Activated CD4-positive, alpha-beta T cell treated with anti-CD3 and anti-CD28 coated beads for 36 hours (primary cell): ENCODE measurements at regions of chr17 and their contacts with region 1.

Region 1: DNA sequence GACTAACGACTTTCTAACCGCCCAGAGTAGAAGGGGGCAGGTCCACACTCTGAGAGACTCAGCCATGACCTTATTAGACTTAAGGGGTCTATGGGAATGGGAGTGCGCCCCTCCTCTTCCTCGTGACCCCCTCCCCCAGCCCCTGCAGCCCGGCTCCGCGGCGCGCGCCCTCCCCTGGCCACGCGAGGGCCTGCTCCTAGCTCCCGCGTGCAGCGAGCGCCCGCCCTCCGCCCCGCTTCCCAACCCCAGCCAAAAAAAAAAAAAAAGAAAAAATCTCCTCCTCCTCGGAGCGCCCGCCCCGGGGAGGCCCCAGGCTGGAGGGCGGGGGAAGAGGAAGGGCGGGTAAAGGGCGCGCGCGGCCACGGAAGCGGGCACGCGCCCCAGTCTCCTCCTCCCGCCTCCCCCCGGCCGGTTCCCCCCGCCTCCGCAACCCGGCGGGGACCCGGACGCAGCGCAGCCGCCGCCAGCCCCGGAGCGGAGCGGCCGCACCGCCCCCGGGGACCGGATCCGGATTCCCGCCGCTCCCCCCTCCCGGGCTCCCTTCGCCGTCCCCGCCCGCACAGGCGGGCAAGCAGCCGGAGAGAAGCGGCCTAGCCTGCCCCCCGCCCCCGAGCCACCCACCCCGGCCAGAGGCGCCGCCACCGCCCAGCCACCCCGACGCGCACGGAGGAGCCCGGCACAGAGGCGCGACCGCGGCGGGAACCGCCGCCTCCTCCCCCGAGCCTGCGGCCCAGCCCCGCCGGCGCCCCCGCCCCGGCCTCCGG is 949 bp downstream of the UBTF start:
- DNase-seq: peak; percentile 93
- ATAC-seq: peak; percentile 43
- H3K4me3 Mint-ChIP-seq: peak overlapping the region; percentile 99
- H3K27ac Mint-ChIP-seq: peak overlapping the region; percentile 99
- H3K4me1 Mint-ChIP-seq: peaks cover 51% of the 10 kb centered on the region
- H3K27me3 Mint-ChIP-seq: no peaks in the 10 kb centered on the region

Region 2: DNA sequence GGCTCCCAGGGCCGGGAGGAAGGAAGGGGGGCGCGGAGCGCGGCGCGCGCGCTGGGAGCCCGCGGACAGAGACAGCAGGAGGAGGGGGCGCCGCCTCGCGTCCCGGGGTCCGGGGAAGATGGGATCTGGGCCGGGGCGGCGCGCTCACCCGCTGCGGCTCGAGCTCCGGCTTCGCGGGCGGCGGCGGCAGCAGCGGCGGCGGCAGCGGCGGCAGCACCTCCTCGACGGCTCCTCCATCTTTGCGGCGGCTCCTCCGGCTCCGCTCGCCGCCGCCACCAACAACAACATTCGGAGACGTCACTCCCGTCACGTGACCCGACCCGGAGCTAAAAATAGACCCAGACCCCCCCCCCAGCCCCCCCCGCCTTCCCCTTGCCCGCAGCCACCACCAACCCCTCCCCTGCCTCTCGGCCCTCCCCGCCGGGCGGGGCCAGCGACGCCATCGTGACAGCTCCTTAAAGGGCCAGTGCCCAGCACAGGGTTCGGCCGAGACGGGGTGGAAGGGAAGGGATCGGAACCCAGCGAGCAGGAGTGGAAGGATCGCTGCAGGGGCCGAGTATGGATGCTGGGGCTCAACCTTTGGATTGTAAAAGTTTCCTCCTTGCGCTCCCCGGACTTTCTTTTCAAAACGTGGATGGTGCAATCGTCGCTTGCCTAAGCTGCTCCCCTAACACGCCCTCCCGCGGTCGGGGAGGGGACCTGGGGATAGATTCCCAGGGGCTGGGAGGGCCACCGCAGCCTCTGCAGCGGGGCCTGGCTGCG is 95.0 kb before region 1 on chr17 and contains the start of gene HDAC5:
- CTCF ChIA-PET with region 1: no interaction called
- POLR2A ChIA-PET with region 1: no interaction called
- intact Hi-C with region 1: loop called in 1 of 2 experiments (anchors 1 kb)
- DNase-seq: peak; percentile 98
- ATAC-seq: peak; percentile 97
- H3K4me3 Mint-ChIP-seq: peak within 1 kb of the TSS; percentile 87
- H3K27ac Mint-ChIP-seq: peak within 1 kb of the TSS; percentile 97
- H3K4me1 Mint-ChIP-seq: peaks cover 22% of the 10 kb centered on the region
- H3K27me3 Mint-ChIP-seq: no peaks in the 10 kb centered on the region
- total RNA-seq, gene HDAC5: 16.5 to 22.0 TPM

Region 3: DNA sequence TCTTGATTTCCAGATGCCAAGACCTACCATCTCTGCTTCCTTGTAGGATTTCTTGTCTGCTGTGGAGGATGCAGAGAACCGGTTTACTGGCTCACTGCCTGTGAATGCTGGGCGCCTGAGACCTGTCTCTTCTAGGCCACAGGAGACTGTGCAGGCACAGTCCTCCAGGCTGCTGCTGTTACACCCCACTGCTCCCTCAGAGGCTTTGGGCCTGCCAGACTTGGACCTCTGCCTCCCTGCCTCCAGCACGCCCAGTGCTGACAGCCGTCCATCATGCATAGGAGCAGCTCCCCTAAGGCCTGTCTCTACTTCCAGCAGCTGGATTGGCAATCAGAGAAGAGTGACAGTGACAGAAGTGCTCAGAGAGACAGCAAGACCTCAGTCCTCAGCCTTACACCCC is 70.7 kb before region 1 on chr17:
- CTCF ChIA-PET with region 1: no interaction called
- POLR2A ChIA-PET with region 1: no interaction called
- intact Hi-C with region 1: no loop called
- DNase-seq: no peak
- ATAC-seq: no peak
- H3K4me3 Mint-ChIP-seq: no peak overlapping the region
- H3K27ac Mint-ChIP-seq: no peak overlapping the region
- H3K4me1 Mint-ChIP-seq: peaks cover under 1% of the 10 kb centered on the region
- H3K27me3 Mint-ChIP-seq: no peaks in the 10 kb centered on the region

Region 4: GRCh38 chr17:44199553-44200477 is 18.7 kb before region 1 on chr17 and contains the start of gene ATXN7L3:
- CTCF ChIA-PET with region 1: interaction called, 28 read pairs
- POLR2A ChIA-PET with region 1: interaction called, 3 read pairs
- intact Hi-C with region 1: loop called (anchors 1 kb)
- DNase-seq: peak; percentile 100
- ATAC-seq: peak; percentile 84
- H3K4me3 Mint-ChIP-seq: peak within 1 kb of the TSS; percentile 88
- H3K27ac Mint-ChIP-seq: peak within 1 kb of the TSS; percentile 94
- H3K4me1 Mint-ChIP-seq: peaks cover 38% of the 10 kb centered on the region
- H3K27me3 Mint-ChIP-seq: no peaks in the 10 kb centered on the region
- total RNA-seq, gene ATXN7L3: 66.3 to 70.6 TPM

Region 5: GRCh38 chr17:44308320-44308818 is 89.8 kb after region 1 on chr17 and contains the start of gene RUNDC3A:
- CTCF ChIA-PET with region 1: no interaction called
- POLR2A ChIA-PET with region 1: interaction called, 4 read pairs
- intact Hi-C with region 1: loop called in 1 of 2 experiments (anchors 1 kb)
- DNase-seq: peak; percentile 91
- ATAC-seq: peak; percentile 91
- H3K4me3 Mint-ChIP-seq: no peak within 1 kb of the TSS
- H3K27ac Mint-ChIP-seq: no peak within 1 kb of the TSS
- H3K4me1 Mint-ChIP-seq: peaks cover 5% of the 10 kb centered on the region
- H3K27me3 Mint-ChIP-seq: peaks cover 28% of the 10 kb centered on the region
- total RNA-seq, gene RUNDC3A: 0.11 TPM in 1 of 2 experiments, not detected in the other

Region 6: GRCh38 chr17:44331249-44331760 is 112.8 kb after region 1 on chr17:
- CTCF ChIA-PET with region 1: interaction called, 17 read pairs
- POLR2A ChIA-PET with region 1: interaction called, 11 read pairs
- intact Hi-C with region 1: no loop called
- DNase-seq: peak; percentile 82
- ATAC-seq: peak; percentile 64
- H3K4me3 Mint-ChIP-seq: no peak overlapping the region
- H3K27ac Mint-ChIP-seq: no peak overlapping the region
- H3K4me1 Mint-ChIP-seq: peaks cover 12% of the 10 kb centered on the region
- H3K27me3 Mint-ChIP-seq: no peaks in the 10 kb centered on the region

Region 7: DNA sequence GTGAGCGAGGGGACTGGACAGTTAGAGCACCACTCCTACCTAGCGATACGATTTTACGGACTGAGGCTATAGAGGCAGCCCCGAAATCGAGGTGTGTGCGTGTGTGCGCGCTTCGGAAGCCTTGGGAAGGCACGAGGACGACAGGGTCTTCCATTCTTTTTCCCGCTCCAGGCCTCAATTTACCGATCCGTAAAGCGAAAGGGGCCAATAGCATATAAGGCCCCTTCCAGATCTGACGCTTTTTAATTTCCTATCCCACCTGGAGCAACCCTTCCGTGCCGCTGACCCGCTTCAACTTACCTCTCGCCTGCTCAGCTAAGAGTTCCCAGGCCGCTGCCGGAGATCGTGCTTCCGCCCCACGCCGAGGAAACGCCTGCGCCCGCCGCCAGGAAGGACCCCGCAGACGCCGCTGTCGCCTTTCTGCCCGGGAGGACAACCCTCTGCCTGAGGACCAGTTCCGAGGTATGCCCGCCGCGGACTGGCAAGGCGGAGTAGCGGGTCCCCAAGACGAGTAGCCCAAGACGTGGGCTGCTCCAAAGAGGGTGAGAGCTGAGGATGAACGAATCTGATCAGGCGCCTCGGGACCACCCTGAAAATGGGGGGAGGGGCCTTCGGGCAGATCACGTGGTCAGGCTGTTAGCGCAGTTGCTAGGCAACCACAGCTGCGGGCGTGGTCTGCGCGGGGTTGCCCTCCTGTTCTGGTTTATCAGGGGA is 680.7 kb after region 1 on chr17 and contains the start of gene EFTUD2:
- CTCF ChIA-PET with region 1: no interaction called
- POLR2A ChIA-PET with region 1: no interaction called
- intact Hi-C with region 1: loop called in 1 of 2 experiments (anchors 10 kb)
- DNase-seq: peak; percentile 95
- ATAC-seq: peak; percentile 94
- H3K4me3 Mint-ChIP-seq: peak within 1 kb of the TSS; percentile 98
- H3K27ac Mint-ChIP-seq: peak within 1 kb of the TSS; percentile 98
- H3K4me1 Mint-ChIP-seq: peaks cover 26% of the 10 kb centered on the region
- H3K27me3 Mint-ChIP-seq: no peaks in the 10 kb centered on the region
- total RNA-seq, gene EFTUD2: 175 to 203 TPM

Region 8: DNA sequence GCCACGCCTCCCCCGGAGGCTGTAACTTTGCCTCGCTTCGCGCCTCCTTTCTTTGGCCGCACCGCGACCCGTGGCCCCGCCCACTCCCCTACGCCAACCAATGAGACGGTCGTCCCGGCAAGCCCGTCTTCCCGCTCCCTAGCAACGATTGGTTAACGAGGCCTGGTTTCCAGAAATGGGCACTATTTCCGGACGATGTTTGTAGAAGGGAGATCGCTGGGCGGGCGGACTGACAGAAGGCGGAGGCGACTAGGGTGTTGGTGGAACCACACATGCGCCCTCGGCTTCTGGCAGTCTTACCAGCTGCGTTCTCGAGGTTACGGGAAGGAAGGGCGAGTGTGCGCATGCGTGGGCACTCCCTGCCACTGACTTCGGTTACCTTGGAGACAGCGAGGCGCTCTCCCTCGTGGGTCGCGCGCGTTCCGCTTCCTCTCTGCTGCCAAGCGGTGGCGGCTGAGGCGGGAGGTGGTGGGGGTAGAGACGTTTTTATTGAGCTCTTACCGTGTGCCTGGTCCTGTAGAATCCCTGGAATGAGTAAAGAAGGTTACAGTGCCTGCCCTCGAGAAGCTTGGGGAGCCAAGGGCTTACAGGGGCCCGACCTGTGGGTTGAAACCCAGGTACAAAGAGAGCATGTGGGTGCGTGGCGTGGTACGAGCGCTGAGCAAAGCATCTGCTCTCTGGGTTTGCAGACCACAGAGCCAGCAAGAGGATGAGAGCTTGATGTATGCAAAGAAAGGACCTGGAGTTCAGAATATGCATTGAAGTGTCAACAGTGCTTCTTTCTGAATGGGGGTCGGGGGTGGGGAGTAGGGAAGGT is 1098.8 kb after region 1 on chr17:
- CTCF ChIA-PET with region 1: no interaction called
- POLR2A ChIA-PET with region 1: no interaction called
- intact Hi-C with region 1: loop called in 1 of 2 experiments (anchors 5 kb)
- DNase-seq: peak; percentile 100
- ATAC-seq: peak; percentile 81
- H3K4me3 Mint-ChIP-seq: peak overlapping the region; percentile 91
- H3K27ac Mint-ChIP-seq: peak overlapping the region; percentile 89
- H3K4me1 Mint-ChIP-seq: peaks cover 65% of the 10 kb centered on the region
- H3K27me3 Mint-ChIP-seq: no peaks in the 10 kb centered on the region